Psoas muscle (tissue), 8 donors: ENCODE measurements at regions of chr3 and their contacts with region 1.

Region 1: DNA sequence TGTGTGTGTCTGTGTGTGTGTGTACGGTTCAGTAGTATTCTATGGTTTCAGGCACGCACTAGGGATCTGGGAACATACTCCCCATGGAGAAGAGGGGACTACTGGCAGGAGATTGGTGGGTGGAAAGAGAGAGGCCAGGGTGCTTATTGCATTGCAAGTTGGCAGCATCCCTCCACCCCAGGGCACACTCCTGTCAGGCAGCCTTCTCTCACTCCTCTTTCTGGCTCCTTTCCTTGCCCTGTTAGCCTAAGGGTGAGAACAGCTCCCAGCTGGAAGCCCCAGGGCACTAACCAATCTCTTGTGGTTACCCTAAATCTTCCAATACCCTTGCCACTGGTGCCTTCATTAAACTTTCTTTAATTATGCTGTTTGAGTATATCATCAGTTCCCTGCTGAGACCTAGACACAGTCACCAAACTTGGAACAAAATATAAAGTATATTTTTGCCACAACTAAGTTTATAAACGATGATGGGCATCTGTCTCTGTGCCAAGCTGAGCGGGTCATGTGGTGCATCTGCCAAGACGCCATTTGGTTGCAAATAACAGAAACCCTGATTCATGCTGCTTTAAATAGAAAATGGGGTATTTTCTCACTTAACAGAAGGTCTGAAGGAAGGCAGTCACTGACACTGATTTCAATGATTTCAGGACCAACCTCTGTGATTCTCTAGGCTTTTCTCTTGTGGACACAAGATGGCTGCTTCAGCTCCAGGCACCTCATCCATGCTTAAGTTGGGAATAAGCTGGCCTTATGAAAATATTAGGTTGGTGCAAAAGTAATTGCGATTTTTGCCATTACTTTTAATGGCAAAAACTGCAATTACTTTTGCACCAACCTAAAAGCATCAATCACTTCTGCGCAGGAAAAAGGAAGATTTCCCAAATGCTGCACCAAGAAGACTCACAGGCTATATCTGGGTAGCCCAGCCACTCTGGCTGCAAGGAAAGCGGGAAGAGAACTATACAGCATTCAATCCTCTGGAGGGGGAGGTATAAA is 476.9 kb upstream of the PROK2 start:
- DNase-seq: no peak
- ATAC-seq: peak in 3 of 4 donors; percentile 21 to 37 (median 21)
- H3K4me3 ChIP-seq: no peak overlapping the region
- H3K27ac ChIP-seq: no peak overlapping the region
- H3K4me1 ChIP-seq: no peaks in the 10 kb centered on the region
- H3K27me3 ChIP-seq: peaks cover 0 to 6% (median 2%) of the 10 kb centered on the region in 3 donors
- CTCF ChIP-seq: no peak

Region 2: GRCh38 chr3:71916745-71917369 is 345.0 kb before region 1 on chr3:
- intact Hi-C with region 1: no loop called
- DNase-seq: peak in 1 of 2 donors; percentile 23
- ATAC-seq: no peak
- H3K4me3 ChIP-seq: no peak overlapping the region
- H3K27ac ChIP-seq: no peak overlapping the region
- H3K4me1 ChIP-seq: no peaks in the 10 kb centered on the region
- H3K27me3 ChIP-seq: peaks cover 0 to 4% (median 0%) of the 10 kb centered on the region in 3 donors
- CTCF ChIP-seq: no peak

Region 3: DNA sequence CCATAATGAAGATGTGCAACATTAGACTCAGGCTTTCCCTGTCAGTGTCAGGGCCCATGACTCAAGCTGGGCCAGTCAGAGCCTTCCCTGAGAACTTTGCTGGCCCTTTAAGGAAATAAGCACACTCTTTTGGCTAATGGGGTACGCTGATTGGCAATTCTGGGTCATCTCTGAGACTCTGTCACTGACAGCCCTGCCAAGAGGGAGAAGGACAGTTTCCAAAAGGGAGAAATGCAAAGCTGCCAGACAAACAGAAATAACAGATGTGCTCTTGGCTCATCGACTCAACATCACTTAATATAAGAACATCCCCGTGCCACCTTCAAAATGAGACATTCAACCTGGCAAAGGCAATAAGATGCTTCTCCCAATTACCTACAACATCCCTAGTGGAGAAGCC is 14.9 kb after region 1 on chr3:
- intact Hi-C with region 1: loop called in 1 of 2 experiments (anchors 1 kb)
- DNase-seq: no peak
- ATAC-seq: no peak
- H3K4me3 ChIP-seq: no peak overlapping the region
- H3K27ac ChIP-seq: no peak overlapping the region
- H3K4me1 ChIP-seq: no peaks in the 10 kb centered on the region
- H3K27me3 ChIP-seq: no peaks in the 10 kb centered on the region
- CTCF ChIP-seq: no peak

Region 4: DNA sequence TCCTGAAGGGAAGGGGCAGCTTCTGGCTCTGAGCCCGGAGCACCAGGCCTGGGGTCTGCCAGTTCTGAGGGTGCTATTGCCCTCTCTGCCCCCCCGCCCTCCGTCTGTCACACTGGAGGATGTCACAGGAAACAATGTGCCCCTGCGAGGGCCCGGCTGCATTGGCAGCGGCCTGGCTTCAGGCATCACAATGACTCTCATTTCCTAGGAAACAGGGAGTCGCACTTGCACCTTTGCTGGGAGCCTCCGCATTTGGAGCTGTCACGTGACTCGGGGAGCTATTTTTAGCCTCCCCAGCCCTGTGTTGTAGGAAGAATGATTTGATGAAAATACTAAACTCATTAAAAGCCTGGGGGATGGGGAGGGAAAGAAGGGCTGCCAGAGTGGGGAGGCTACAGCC is 67.5 kb after region 1 on chr3:
- intact Hi-C with region 1: no loop called
- DNase-seq: no peak
- ATAC-seq: no peak
- H3K4me3 ChIP-seq: no peak overlapping the region
- H3K27ac ChIP-seq: no peak overlapping the region
- H3K4me1 ChIP-seq: no peaks in the 10 kb centered on the region
- H3K27me3 ChIP-seq: no peaks in the 10 kb centered on the region
- CTCF ChIP-seq: no peak